Activated CD4-positive, alpha-beta T cell treated with anti-CD3 and anti-CD28 coated beads for 36 hours (primary cell): ENCODE measurements at regions of chr7 and their contacts with region 1.

Region 1: GRCh38 chr7:127651556-127652332 is at the start of gene SND1:
- DNase-seq: peak; percentile 99
- ATAC-seq: peak; percentile 94
- H3K4me3 Mint-ChIP-seq: no peak within 1 kb of the TSS
- H3K27ac Mint-ChIP-seq: peak within 1 kb of the TSS; percentile 99
- H3K4me1 Mint-ChIP-seq: peaks cover 37% of the 10 kb centered on the region
- H3K27me3 Mint-ChIP-seq: no peaks in the 10 kb centered on the region
- total RNA-seq, gene SND1: 193 to 214 TPM

Region 2: GRCh38 chr7:127667017-127667670 is 15.4 kb after region 1 on chr7:
- CTCF ChIA-PET with region 1: interaction called, 3 read pairs
- POLR2A ChIA-PET with region 1: no interaction called
- intact Hi-C with region 1: loop called in 1 of 2 experiments (anchors 1 kb)
- DNase-seq: no peak
- ATAC-seq: peak; percentile 84
- H3K4me3 Mint-ChIP-seq: peak overlapping the region; percentile 28
- H3K27ac Mint-ChIP-seq: peak overlapping the region; percentile 93
- H3K4me1 Mint-ChIP-seq: peaks cover 54% of the 10 kb centered on the region
- H3K27me3 Mint-ChIP-seq: no peaks in the 10 kb centered on the region

Region 3: DNA sequence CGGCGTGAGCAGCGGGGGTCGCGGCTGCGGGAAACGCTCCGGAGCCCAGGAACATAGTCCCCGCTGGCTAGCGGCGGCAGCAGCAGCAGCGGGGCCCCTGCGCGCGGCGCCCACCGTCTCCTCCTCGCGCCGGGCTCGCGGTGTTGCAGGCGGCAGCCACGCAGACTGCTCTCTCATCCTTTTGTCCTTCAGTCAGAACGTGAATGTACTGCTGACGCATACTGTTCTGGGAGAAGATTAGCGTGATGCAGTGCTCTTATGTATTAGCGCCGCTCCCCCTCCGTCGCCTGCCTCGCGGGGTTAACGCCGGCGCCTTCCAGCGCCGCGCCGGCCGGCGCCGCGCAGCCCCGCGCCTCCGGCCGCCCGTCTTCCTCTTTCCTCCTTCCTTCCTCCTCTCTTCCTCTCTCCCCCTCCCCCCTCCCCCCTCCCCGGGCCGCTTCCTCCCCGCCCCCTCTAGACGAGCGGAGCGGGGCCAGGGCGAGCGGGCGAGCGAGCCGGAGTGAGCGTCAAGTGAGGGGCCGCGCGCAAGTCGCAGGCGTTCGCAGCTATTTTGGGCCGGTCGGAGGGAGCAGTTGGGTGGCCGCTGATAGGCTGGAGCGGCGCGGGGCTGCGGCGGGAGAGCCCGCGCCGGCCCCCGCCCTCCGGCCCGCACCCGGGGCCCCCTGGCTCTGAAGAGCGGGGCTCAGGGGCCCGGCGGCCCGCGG is 380.3 kb after region 1 on chr7:
- CTCF ChIA-PET with region 1: no interaction called
- POLR2A ChIA-PET with region 1: no interaction called
- intact Hi-C with region 1: loop called in 1 of 2 experiments (anchors 5 kb)
- DNase-seq: peak; percentile 81
- ATAC-seq: peak; percentile 98
- H3K4me3 Mint-ChIP-seq: peak overlapping the region; percentile 64
- H3K27ac Mint-ChIP-seq: no peak overlapping the region
- H3K4me1 Mint-ChIP-seq: peaks cover 27% of the 10 kb centered on the region
- H3K27me3 Mint-ChIP-seq: no peaks in the 10 kb centered on the region

Region 4: GRCh38 chr7:128135515-128136214 is 483.9 kb after region 1 on chr7:
- CTCF ChIA-PET with region 1: no interaction called
- POLR2A ChIA-PET with region 1: no interaction called
- intact Hi-C with region 1: loop called in 1 of 2 experiments (anchors 2 kb)
- DNase-seq: peak; percentile 83
- ATAC-seq: peak; percentile 92
- H3K4me3 Mint-ChIP-seq: peak overlapping the region; percentile 63
- H3K27ac Mint-ChIP-seq: no peak overlapping the region
- H3K4me1 Mint-ChIP-seq: peaks cover 21% of the 10 kb centered on the region
- H3K27me3 Mint-ChIP-seq: peaks cover 27% of the 10 kb centered on the region